OCI-LY7 (cell line): ENCODE measurements at regions of chr1 and their contacts with region 1.

Region 1: GRCh38 chr1:150683914-150684313 is 13.0 kb downstream of the GOLPH3L start:
- DNase-seq: peak; percentile 53
- H3K4me3 ChIP-seq: peak overlapping the region; percentile 21
- H3K27ac ChIP-seq: peak overlapping the region; percentile 40
- H3K4me1 ChIP-seq: peaks cover 11% of the 10 kb centered on the region
- CTCF ChIP-seq: no peak

Region 2: DNA sequence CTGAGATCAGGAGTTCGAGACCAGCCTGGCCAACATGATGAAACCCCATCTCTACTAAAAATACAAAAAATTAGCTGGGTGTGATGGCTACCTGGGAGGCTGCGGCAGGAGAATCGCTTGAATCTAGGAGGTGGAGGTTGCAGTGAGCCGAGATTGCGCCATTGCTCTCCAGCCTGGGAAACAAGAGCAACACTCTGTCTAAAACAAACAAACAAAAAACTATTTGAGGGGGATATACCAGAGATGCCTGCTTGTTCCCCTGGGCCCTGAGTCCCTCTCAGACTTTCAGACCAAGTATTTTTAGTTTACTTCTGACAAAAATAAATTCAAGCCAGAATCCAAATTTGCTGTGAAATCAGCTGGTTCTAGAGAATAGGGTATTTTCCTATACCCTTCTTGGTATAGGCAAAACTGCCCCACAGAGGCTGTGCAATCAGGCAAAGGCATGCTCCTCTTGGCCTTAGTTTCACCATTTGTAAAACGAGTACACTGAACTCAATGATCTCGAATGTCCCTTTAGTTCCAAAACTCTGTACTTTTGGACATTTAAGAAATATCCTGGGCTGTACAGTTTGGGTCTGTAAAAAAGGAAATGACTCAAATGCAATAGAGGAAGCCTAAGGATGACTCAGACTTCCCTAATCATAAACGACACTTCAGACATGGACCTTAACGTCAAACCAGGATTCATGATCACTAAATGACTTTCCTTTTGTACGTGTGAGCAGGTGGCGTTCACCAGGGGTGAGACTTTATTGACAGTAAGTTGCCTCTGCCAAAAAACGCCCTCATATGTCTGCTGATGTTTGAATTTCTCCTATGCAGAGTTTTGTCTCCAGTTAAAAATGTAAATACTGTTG is 70.6 kb before region 1 on chr1:
- CTCF ChIA-PET with region 1: no interaction called
- POLR2A ChIA-PET with region 1: no interaction called
- intact Hi-C with region 1: no loop called
- DNase-seq: peak; percentile 53
- H3K4me3 ChIP-seq: no peak overlapping the region
- H3K27ac ChIP-seq: peak overlapping the region; percentile 85
- H3K4me1 ChIP-seq: peaks cover 65% of the 10 kb centered on the region
- CTCF ChIP-seq: no peak

Region 3: DNA sequence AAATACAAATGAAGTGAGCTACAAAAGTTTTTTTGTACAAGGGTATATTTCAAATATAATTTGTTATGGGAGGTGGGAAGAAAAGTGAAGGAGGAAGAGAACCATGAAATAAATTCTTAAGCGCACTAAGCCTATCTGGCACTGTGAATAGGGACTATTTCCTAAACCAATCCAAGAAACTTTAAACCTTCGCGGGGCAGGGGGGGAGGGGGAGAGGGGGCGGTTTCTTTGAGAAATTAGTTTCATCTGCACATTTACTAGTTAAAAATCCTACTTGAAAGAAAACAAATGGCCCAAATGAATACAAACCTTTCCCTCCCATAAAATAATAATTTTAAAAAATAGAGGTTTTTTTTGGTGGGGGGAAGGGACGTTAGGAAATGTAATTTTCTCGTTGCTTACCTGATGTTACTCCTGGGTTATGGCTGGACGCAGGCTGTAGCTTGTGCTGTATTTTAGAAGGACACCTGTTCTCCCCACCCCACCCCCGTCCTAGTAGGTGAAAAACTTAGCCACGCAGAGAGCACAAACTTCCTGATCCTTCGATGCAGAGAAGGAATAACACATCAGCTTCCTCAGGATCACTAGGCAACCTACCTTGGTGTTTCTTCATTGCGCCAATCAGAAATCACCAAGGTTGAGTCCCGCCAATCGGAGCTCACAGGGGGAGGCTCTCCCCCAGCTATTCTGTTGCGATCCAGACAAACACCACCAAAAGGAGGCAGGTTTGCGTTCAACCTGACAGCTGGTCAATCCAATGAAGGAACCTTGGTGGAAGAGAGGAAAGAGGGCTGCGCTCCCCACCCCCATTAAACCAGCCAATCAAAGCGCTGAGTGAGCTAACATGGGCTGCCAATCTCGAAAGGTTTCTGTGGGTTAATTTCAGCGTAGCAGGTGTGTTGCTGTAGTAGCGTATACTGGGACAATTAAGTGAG is 12.9 kb after region 1 on chr1 and contains the start of gene GOLPH3L:
- CTCF ChIA-PET with region 1: interaction called, 4 read pairs
- POLR2A ChIA-PET with region 1: interaction called, 18 read pairs
- intact Hi-C with region 1: no loop called
- DNase-seq: peak; percentile 98
- H3K4me3 ChIP-seq: peak within 1 kb of the TSS; percentile 81
- H3K27ac ChIP-seq: peak within 1 kb of the TSS; percentile 27
- H3K4me1 ChIP-seq: peaks cover 19% of the 10 kb centered on the region
- CTCF ChIP-seq: no peak
- total RNA-seq, gene GOLPH3L: 6.2 and 13.2 TPM in 2 replicates